Activated CD8-positive, alpha-beta T cell treated with anti-CD3 and anti-CD28 coated beads, Interleukin-2, amount 10 ng/mL, durations not matched to agents 7 days and 5 days (primary cell): ENCODE measurements at regions of chr14 and their contacts with region 1.

Region 1: GRCh38 chr14:65412032-65412846 is at the start of gene FUT8:
- DNase-seq: peak; percentile 95
- ATAC-seq: peak; percentile 89
- H3K4me3 Mint-ChIP-seq: peak within 1 kb of the TSS; percentile 100
- H3K27ac Mint-ChIP-seq: peak within 1 kb of the TSS; percentile 98
- H3K4me1 Mint-ChIP-seq: peaks cover 53% of the 10 kb centered on the region
- H3K27me3 Mint-ChIP-seq: no peaks in the 10 kb centered on the region
- total RNA-seq, gene FUT8: 99.2 to 101 TPM

Region 2: GRCh38 chr14:65170768-65171507 is 241.3 kb before region 1 on chr14:
- CTCF ChIA-PET with region 1: interaction called, 89 read pairs
- POLR2A ChIA-PET with region 1: interaction called, 6 read pairs
- DNase-seq: peak; percentile 62
- ATAC-seq: peak; percentile 84
- H3K4me3 Mint-ChIP-seq: peak overlapping the region; percentile 63
- H3K27ac Mint-ChIP-seq: peak overlapping the region; percentile 50
- H3K4me1 Mint-ChIP-seq: peaks cover 32% of the 10 kb centered on the region
- H3K27me3 Mint-ChIP-seq: peaks cover 7% of the 10 kb centered on the region

Region 3: DNA sequence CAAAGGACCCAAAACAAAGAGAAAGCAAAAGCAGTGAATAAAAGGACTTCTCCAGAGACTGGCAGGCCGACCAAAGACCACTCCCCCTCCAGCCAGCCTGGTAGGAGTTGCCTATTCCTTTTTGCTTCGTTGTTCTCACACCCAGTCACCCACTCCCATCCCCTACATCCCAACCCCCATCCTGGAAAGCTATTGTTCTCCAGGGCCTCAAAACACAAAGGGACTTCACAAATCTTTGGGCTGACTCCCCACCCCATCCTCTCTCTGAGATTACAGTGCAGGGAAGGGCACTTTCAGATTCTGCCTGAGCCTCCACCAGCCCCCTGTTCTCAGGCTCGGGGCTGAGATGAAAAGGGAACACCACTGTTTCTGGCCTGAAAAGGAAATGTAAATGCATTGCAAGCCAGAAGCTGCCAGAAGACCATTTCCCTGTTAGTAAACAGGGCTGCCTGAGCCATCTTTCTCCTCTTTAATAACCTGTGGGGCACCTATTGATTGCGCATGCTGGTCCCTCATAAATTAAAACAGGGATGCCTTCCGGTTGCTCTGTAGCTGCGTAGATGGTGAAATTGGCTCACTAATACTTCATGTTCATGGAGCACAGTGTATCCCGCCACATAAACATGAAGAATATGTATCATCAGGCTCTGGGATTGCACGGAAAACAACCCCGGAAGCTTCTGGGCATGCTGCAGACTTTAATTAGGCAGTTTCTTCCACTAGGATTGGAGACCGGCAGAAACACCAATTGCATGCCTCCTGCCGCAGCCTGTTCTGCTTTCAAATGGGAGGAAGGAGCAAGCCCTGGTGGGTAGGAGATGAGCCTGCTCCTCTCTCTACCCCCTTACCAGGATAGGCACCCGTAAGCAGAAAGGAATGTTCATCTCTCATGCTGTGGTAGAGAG is 130.0 kb before region 1 on chr14:
- CTCF ChIA-PET with region 1: interaction called, 171 read pairs
- POLR2A ChIA-PET with region 1: interaction called, 77 read pairs
- DNase-seq: peak; percentile 64
- ATAC-seq: peak; percentile 63
- H3K4me3 Mint-ChIP-seq: peak overlapping the region; percentile 76
- H3K27ac Mint-ChIP-seq: peak overlapping the region; percentile 94
- H3K4me1 Mint-ChIP-seq: peaks cover 43% of the 10 kb centered on the region
- H3K27me3 Mint-ChIP-seq: no peaks in the 10 kb centered on the region

Region 4: DNA sequence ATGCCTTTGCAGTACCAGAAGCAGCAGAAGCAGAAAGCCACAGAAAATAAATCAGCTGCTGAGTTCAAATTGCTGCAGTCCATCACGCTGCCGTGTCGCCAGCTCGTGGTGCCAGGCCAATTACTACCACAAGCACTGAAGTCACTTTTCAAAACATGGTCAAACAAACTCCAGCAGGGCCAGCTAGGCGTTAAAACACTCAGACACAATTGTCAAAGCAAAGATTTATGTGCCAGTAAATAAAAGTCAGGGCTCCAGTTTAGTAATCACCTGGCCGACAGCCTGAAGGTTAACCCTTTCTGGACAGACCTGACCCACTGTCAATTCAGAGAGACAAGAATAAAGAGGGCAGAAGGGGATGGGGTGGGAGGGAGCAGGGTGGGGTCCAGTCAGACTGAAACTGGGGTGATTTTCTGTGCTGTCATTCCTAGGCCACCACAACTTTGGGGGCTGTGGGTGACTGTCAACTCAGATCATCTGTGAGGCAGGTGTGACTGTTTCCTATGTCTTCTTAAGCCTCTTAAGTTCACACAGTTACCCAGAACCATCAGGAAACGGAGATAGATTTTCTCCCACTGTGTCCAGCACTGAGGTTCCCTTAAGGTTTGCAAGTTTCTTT is 109.6 kb before region 1 on chr14:
- CTCF ChIA-PET with region 1: interaction called, 53 read pairs
- POLR2A ChIA-PET with region 1: interaction called, 28 read pairs
- DNase-seq: peak; percentile 86
- ATAC-seq: peak; percentile 81
- H3K4me3 Mint-ChIP-seq: peak overlapping the region; percentile 44
- H3K27ac Mint-ChIP-seq: peak overlapping the region; percentile 78
- H3K4me1 Mint-ChIP-seq: peaks cover 81% of the 10 kb centered on the region
- H3K27me3 Mint-ChIP-seq: no peaks in the 10 kb centered on the region

Region 5: GRCh38 chr14:65423982-65424381 is 11.7 kb after region 1 on chr14:
- CTCF ChIA-PET with region 1: interaction called, 12 read pairs
- POLR2A ChIA-PET with region 1: interaction called, 3 read pairs
- DNase-seq: no peak
- ATAC-seq: no peak
- H3K4me3 Mint-ChIP-seq: no peak overlapping the region
- H3K27ac Mint-ChIP-seq: no peak overlapping the region
- H3K4me1 Mint-ChIP-seq: peaks cover 38% of the 10 kb centered on the region
- H3K27me3 Mint-ChIP-seq: no peaks in the 10 kb centered on the region

Region 6: GRCh38 chr14:66070509-66071319 is 658.5 kb after region 1 on chr14:
- CTCF ChIA-PET with region 1: interaction called, 55 read pairs
- POLR2A ChIA-PET with region 1: interaction called, 3 read pairs
- DNase-seq: peak; percentile 82
- ATAC-seq: peak; percentile 77
- H3K4me3 Mint-ChIP-seq: no peak overlapping the region
- H3K27ac Mint-ChIP-seq: no peak overlapping the region
- H3K4me1 Mint-ChIP-seq: peaks cover 13% of the 10 kb centered on the region
- H3K27me3 Mint-ChIP-seq: peaks cover 6% of the 10 kb centered on the region

Region 7: DNA sequence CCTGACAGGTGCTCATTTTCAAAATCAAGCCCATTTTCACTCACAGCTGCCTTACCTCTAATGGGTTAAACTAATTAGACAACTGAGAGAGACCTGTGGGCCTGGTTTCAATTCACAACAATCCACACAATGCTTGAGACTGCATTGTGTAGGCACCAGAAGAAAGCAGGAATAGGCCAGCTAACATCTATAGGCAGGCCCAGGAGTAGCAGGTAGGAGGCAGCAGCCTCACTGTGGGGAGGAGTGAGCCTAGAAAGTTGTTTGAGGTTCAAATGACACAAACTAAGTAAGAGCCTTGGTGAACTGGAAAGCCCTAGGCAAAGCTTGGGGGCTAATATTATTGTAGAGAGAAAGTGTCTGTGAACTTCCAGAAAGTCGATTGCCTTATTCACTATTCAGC is 784.4 kb after region 1 on chr14:
- CTCF ChIA-PET with region 1: no interaction called
- POLR2A ChIA-PET with region 1: no interaction called
- DNase-seq: no peak
- ATAC-seq: no peak
- H3K4me3 Mint-ChIP-seq: no peak overlapping the region
- H3K27ac Mint-ChIP-seq: no peak overlapping the region
- H3K4me1 Mint-ChIP-seq: no peaks in the 10 kb centered on the region
- H3K27me3 Mint-ChIP-seq: peaks cover 6% of the 10 kb centered on the region